ENCODE measurements at regions of chr16 and their contacts with region 1.

Region 1: DNA sequence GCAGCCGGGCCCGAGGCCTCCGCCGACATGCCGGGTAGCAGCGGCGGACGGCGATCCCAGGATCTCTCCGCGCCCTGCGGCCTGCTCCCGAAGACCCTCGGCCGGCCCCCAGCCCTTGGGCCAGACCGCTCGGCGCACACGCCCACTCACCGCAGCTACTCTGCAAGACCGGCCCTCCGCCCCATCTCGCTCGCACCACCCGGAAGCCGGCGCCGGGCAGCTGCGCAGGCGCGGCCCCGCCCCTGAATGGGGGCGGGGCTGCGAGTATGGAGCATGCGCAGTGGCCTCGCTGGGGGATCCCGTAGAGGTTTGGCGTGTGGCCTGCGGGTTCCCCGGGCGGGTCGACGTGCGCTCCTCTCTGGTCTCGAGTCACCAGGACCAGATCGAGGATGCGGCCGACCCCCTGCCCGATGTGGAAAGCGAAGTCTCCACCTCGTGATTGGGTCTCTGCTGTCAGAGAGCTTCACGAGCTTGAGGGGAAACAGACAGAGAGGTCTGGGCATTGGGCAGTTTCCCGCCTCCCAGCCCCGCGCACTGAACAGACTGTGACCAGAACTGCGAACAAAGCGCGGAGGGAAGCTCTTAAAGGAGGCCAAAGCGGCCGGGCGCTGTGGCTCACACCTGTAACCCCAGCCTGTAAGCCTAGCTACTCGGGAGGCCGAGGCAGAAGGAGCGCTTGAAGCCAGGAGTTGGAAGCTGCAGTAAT is at the start of gene KCTD13:
- DNase-seq: peak; percentile 73 to 78 (median 77)
- H3K4me3 ChIP-seq: peak within 1 kb of the TSS; percentile 77 to 94 (median 87)
- H3K4me3 Mint-ChIP-seq: peak within 1 kb of the TSS; percentile 93 to 98
- H3K27ac ChIP-seq: peak within 1 kb of the TSS; percentile 62 to 77
- H3K27ac Mint-ChIP-seq: peak within 1 kb of the TSS; percentile 88 to 95 (median 93)
- H3K4me1 ChIP-seq: peaks cover 16 to 23% of the 10 kb centered on the region in 2 donors
- H3K4me1 Mint-ChIP-seq: peaks cover 29% of the 10 kb centered on the region
- H3K27me3 ChIP-seq: no peaks in the 10 kb centered on the region
- H3K27me3 Mint-ChIP-seq: peaks cover 0 to 3% (median 0%) of the 10 kb centered on the region in 3 donors
- CTCF ChIP-seq: no peak
- polyA plus RNA-seq, gene KCTD13: 4.0 to 36.6 (median 4.7) TPM

Region 2: DNA sequence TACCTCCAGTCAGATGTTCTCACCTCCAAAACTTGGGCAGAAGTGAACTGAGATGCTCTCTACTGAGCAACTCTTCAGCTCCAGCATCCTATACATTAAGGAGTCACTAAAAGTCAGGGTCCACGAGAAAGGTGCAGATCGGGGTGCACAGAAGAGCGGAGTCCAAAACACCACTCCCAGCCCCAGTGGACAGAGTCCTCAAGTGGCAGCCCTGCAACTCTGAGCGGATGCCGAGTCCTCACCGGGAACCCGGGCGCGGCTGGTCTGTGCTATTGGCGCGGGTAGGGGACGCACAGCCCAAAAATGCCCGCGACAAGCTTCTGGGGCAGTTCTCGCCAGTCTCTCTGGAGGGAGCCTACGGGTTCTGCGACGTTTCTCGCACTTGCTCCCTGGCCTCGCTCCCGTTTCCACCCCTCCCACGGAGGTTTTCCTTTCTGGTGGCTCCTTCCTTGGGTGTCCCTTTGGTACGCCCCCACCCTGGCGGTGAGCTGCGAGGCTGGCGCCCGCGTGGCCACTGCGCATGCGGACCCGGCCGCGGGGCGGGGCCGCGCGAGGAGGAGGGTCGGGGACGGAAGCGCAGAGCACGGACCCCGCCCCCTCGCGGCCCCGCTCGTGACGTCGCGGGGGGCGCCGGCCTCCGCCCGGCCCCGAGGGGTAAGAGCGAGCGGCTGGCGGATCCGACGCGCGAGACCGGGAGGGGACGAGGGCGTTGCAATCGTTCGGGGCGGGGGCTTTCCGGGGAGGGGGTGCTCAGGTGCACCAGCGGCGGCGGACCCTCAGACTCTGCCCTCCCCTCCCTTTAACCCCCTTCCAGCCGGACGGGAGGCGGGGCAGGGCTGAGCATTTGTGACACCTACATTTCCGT is 35.6 kb after region 1 on chr16 and contains the start of gene TMEM219:
- intact Hi-C with region 1: loop called (anchors 5 kb)
- DNase-seq: peak; percentile 74 to 78 (median 77)
- H3K4me3 ChIP-seq: peak within 1 kb of the TSS; percentile 87 to 93 (median 91)
- H3K4me3 Mint-ChIP-seq: peak within 1 kb of the TSS; percentile 95 to 96
- H3K27ac ChIP-seq: peak within 1 kb of the TSS; percentile 85 to 92
- H3K27ac Mint-ChIP-seq: peak within 1 kb of the TSS; percentile 88 to 98 (median 96)
- H3K4me1 ChIP-seq: peaks cover 15 to 18% of the 10 kb centered on the region in 2 donors
- H3K4me1 Mint-ChIP-seq: peaks cover 18% of the 10 kb centered on the region
- H3K27me3 ChIP-seq: no peaks in the 10 kb centered on the region
- H3K27me3 Mint-ChIP-seq: peaks cover 2 to 8% (median 2%) of the 10 kb centered on the region in 3 donors
- CTCF ChIP-seq: peak; percentile 28
- polyA plus RNA-seq, gene TMEM219: 157 to 265 (median 227) TPM